Cardiac septum (tissue), 1 donor: ENCODE measurements at regions of chr2 and their contacts with region 1.

Region 1: GRCh38 chr2:15636972-15637785 is 45.5 kb downstream of the DDX1 start:
- DNase-seq: no peak

Region 2: GRCh38 chr2:15472876-15473275 is 164.3 kb before region 1 on chr2:
- intact Hi-C with region 1: no loop called
- DNase-seq: no peak

Region 3: DNA sequence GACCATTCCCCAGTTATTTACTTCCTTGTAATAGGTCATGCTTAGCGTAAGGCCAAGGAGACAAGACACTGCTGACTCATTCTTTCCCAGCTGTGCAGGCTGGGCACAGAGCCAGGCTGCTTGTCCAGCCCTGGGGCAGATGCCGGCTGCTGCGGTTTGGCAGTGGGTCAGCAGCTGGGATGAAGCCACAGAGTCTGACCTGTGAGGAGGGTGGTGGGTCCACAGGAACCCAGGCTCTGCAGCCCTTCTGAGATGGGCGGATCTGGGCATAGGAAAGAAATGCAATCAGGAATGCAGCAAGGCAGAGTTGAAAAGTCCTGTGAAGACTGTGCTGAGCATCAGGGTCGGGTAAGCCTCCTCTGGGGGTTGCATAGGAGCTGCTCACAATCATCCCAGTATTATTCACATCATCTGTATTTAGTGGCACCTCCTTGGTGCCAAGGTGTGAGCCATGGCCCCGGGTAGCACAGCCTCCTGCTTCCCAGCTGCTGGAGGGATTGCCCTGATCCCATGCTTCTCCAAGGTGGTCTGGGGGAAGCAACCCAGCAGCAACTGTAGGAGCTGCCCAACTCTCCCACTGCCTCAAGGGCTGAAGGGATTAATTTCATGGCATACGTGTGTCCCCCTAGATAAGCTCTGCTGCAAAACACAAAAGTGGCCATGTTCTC is 93.5 kb after region 1 on chr2:
- intact Hi-C with region 1: loop called (anchors 5 kb)
- DNase-seq: peak; percentile 95

Region 4: DNA sequence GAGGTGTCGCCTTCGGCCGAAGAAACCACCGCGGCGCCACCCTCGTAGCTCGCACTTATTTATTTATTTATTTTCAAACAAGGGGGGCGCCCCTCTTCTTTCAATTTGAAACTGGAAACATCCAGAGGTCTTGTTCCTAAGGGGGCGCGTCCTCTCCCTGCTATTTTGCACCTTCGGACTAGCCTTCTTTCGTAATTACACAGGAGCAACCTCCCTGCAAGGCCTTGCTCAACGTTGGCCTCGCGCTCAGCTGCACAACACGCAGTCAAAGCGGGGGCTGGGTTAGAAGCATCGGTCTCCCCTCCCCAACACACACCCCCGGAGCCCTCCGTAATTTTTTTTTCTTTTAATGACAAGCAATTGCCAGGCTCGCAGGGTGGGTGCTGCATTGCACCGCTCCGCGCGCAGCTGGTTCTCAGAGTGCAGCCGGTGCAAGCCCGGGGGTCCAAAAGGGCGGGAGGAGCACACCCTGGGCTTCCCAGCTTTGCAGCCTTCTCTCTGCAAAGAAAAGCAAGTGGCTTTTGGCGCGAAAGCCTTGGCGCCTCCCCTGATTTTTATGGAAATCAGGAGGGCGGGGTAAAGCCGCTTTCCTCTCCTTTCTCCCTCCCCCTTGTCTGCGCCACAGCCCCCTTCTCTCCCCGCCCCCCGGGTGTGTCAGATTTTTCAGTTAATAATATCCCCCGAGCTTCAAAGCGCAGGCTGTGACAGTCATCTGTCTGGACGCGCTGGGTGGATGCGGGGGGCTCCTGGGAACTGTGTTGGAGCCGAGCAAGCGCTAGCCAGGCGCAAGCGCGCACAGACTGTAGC is 302.9 kb after region 1 on chr2 and contains the start of gene MYCN:
- intact Hi-C with region 1: loop called (anchors 2 kb)
- DNase-seq: no peak
- total RNA-seq, gene MYCN: 0.43 TPM

Region 5: GRCh38 chr2:16487686-16488085 is 850.5 kb after region 1 on chr2:
- intact Hi-C with region 1: loop called (anchors 5 kb)
- DNase-seq: no peak

Region 6: GRCh38 chr2:16608661-16609643 is 971.8 kb after region 1 on chr2:
- intact Hi-C with region 1: loop called (anchors 2 kb)
- DNase-seq: peak; percentile 93